MCF 10A (cell line): ENCODE measurements at regions of chr2 and their contacts with region 1.

Region 1: GRCh38 chr2:209208211-209208610 is 215.6 kb upstream of the MAP2 start:
- DNase-seq: peak; percentile 54
- H3K4me3 Mint-ChIP-seq: peak overlapping the region; percentile 64
- H3K27ac Mint-ChIP-seq: no peak overlapping the region
- H3K4me1 Mint-ChIP-seq: peaks cover 8% of the 10 kb centered on the region
- H3K27me3 Mint-ChIP-seq: peaks cover 21% of the 10 kb centered on the region
- CTCF ChIP-seq: peak; percentile 73

Region 2: GRCh38 chr2:208101716-208102631 is 1106.2 kb before region 1 on chr2:
- CTCF ChIA-PET with region 1: no interaction called
- POLR2A ChIA-PET with region 1: no interaction called
- intact Hi-C with region 1: loop called (anchors 5 kb)
- DNase-seq: peak; percentile 37
- H3K4me3 Mint-ChIP-seq: no peak overlapping the region
- H3K27ac Mint-ChIP-seq: no peak overlapping the region
- H3K4me1 Mint-ChIP-seq: peaks cover 4% of the 10 kb centered on the region
- H3K27me3 Mint-ChIP-seq: no peaks in the 10 kb centered on the region
- CTCF ChIP-seq: peak; percentile 30

Region 3: DNA sequence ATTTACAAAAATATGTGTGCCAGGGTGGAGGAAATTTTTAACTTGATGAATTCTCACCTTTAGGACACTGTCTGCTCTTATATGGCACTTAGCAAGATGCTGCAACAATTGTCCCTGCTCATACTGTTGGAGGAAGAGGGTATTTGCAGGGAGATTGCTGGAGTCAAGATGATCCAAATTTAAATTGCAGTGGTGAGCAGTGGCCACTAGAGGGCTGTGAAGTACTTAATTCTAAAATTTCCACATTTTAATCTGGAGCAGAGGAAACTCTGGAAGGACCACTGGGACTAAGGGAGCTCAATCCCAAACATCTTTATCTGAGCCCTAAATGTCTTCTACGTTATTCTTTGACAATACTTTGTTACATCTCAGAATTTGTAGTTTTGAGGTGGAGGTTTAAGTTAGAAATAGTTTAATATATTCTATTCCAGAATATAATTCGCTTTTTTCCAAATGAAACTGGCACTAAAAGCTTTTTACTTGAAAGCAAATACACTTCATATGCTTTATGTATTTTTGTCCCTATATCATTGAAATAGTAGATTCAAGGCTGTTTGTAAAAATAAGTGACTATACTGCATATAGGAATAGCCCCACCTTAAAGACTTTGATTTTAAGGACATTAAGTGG is 834.6 kb before region 1 on chr2:
- CTCF ChIA-PET with region 1: interaction called, 4 read pairs
- POLR2A ChIA-PET with region 1: no interaction called
- intact Hi-C with region 1: loop called (anchors 1 kb)
- DNase-seq: peak; percentile 59
- H3K4me3 Mint-ChIP-seq: no peak overlapping the region
- H3K27ac Mint-ChIP-seq: no peak overlapping the region
- H3K4me1 Mint-ChIP-seq: peaks cover 5% of the 10 kb centered on the region
- H3K27me3 Mint-ChIP-seq: no peaks in the 10 kb centered on the region
- CTCF ChIP-seq: peak; percentile 65

Region 4: GRCh38 chr2:208392300-208393080 is 815.7 kb before region 1 on chr2:
- CTCF ChIA-PET with region 1: interaction called, 12 read pairs
- POLR2A ChIA-PET with region 1: no interaction called
- intact Hi-C with region 1: loop called (anchors 1 kb)
- DNase-seq: peak; percentile 17
- H3K4me3 Mint-ChIP-seq: no peak overlapping the region
- H3K27ac Mint-ChIP-seq: no peak overlapping the region
- H3K4me1 Mint-ChIP-seq: no peaks in the 10 kb centered on the region
- H3K27me3 Mint-ChIP-seq: no peaks in the 10 kb centered on the region
- CTCF ChIP-seq: no peak

Region 5: DNA sequence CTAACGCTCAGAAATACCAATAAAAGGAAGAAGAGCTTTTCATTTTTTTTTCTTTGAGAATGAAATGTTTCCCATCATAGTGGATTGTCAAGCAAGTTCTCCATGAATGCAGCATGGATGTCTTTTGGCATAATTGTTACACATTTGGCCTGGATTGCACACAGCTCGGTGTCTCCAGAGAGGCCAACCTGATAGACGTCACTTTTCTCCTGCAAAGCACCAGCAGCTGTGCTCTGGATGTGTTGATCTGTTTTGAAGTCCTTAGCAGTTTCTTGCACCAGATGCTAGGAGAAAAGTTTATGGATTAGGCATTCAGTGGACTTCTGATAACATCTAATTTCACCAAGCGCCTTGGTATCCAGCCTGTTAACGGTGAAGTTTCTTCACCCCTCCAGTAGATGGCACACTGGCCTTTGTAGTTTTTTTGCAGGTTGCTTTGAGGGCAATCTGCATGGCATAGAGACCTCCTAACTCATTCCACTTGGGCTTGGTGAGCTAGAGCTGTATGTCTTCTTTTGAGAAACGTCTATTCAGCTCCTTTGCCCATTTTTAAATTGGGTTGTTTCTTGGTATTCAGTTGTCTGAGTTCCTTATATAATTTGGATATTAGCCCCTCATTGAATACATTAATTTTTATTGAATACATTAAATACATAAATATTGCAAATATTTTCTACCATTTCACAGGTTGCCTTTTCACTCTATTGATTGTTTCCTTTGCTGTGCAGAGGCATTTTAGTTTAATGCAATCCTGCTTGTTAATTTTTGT is 741.9 kb before region 1 on chr2:
- CTCF ChIA-PET with region 1: interaction called, 32 read pairs
- POLR2A ChIA-PET with region 1: no interaction called
- intact Hi-C with region 1: loop called (anchors 1 kb)
- DNase-seq: peak; percentile 68
- H3K4me3 Mint-ChIP-seq: no peak overlapping the region
- H3K27ac Mint-ChIP-seq: no peak overlapping the region
- H3K4me1 Mint-ChIP-seq: no peaks in the 10 kb centered on the region
- H3K27me3 Mint-ChIP-seq: peaks cover 21% of the 10 kb centered on the region
- CTCF ChIP-seq: peak; percentile 75

Region 6: GRCh38 chr2:208820014-208820688 is 388.1 kb before region 1 on chr2:
- CTCF ChIA-PET with region 1: interaction called, 35 read pairs
- POLR2A ChIA-PET with region 1: interaction called, 4 read pairs
- intact Hi-C with region 1: loop called (anchors 1 kb)
- DNase-seq: peak; percentile 18
- H3K4me3 Mint-ChIP-seq: no peak overlapping the region
- H3K27ac Mint-ChIP-seq: no peak overlapping the region
- H3K4me1 Mint-ChIP-seq: no peaks in the 10 kb centered on the region
- H3K27me3 Mint-ChIP-seq: peaks cover 12% of the 10 kb centered on the region
- CTCF ChIP-seq: peak; percentile 30

Region 7: GRCh38 chr2:208872591-208872990 is 335.6 kb before region 1 on chr2:
- CTCF ChIA-PET with region 1: no interaction called
- POLR2A ChIA-PET with region 1: no interaction called
- intact Hi-C with region 1: loop called (anchors 5 kb)
- DNase-seq: peak; percentile 34
- H3K4me3 Mint-ChIP-seq: no peak overlapping the region
- H3K27ac Mint-ChIP-seq: no peak overlapping the region
- H3K4me1 Mint-ChIP-seq: no peaks in the 10 kb centered on the region
- H3K27me3 Mint-ChIP-seq: no peaks in the 10 kb centered on the region
- CTCF ChIP-seq: no peak